Posterior vena cava (tissue), 2 donors: ENCODE measurements at regions of chr1 and their contacts with region 1.

Region 1: DNA sequence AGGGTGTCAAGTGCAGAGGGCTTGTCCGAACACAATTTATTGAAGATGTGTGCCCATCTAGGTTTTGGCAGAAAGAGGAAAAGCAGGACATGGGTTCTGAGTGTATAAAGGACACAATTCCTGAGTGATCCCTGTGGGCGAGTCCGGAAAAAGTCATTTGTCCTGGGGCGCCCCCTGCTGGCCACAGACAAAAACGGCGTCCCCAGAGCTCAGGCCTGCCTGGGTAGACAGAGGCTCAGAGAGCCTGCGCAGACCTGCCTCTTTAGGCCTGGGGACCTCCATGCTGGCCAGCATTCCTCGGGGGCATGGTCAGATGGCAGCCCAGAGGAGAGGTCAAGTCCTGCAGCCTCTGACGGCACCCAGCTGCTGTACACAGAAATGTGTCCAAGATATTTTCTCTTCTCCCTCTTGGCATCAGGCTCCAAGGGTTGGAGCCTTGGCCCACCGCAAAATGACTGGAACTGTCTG is 65.5 kb upstream of the LRP8 start:
- DNase-seq: peak; percentile 91

Region 2: GRCh38 chr1:52927212-52928014 is 465.9 kb before region 1 on chr1 and contains the start of gene SCP2:
- intact Hi-C with region 1: no loop called
- DNase-seq: peak; percentile 93
- total RNA-seq, gene SCP2: 101 to 137 TPM

Region 3: DNA sequence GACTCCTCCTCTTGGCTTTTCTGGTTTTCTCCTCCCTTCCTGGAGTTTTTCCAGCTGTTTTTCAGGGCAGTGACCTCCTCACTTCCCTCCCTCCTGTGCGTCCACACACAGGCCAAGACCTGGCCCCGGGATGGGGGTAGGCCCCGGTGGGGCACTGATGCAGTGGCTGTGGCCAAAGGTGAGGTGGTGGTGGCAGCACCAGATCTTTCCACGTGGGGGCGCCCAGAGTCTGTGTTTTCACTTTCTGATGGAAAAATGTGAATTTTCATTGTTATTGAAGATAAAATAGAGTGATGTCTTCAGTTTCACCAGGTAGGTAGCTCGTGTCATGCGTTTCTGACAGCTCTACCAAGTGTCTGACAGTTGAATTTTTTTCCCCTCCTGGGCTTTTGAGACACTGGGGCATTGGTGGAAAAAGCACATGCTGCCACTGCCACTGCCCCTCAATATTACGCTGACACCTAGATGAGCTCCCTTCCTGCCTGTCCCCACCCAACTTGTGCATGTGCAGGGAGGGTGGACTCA is 115.1 kb before region 1 on chr1:
- intact Hi-C with region 1: loop called (anchors 2 kb)
- DNase-seq: peak; percentile 86

Region 4: GRCh38 chr1:53367503-53368304 is 25.7 kb before region 1 on chr1:
- intact Hi-C with region 1: loop called in 1 of 2 experiments (anchors 1 kb)
- DNase-seq: peak; percentile 75